ENCODE measurements at regions of chr13 and their contacts with region 1.

Region 1: GRCh38 chr13:112606109-112607001 is 18.4 kb upstream of the TUBGCP3 start:
- DNase-seq: peak; percentile 79 to 85
- ATAC-seq: peak; percentile 96 to 97
- H3K4me3 ChIP-seq: peak overlapping the region; percentile 50 to 72 (median 61)
- H3K27ac ChIP-seq: peak overlapping the region; percentile 32 to 66 (median 58)
- H3K4me1 ChIP-seq: peaks cover 5 to 8% of the 10 kb centered on the region in 2 donors
- H3K27me3 ChIP-seq: peaks cover 0 to 8% (median 0%) of the 10 kb centered on the region in 3 donors
- CTCF ChIP-seq: peak; percentile 84 to 97 (median 91)
- POLR2A ChIP-seq: peak; percentile 12 to 30

Region 2: GRCh38 chr13:111474136-111475002 is 1132.0 kb before region 1 on chr13:
- in situ Hi-C with region 1: loop called in 3 of 4 experiments (anchors 10 to 25 kb)
- intact Hi-C with region 1: loop called (anchors 1 kb)
- DNase-seq: no peak
- ATAC-seq: peak in 1 of 2 donors; percentile 45
- H3K4me3 ChIP-seq: no peak overlapping the region
- H3K27ac ChIP-seq: no peak overlapping the region
- H3K4me1 ChIP-seq: no peaks in the 10 kb centered on the region
- H3K27me3 ChIP-seq: peaks cover 0 to 8% (median 0%) of the 10 kb centered on the region in 3 donors
- CTCF ChIP-seq: peak in 4 of 5 experiments; percentile 33 to 52 (median 36)
- POLR2A ChIP-seq: no peak

Region 3: GRCh38 chr13:112079696-112080095 is 526.7 kb before region 1 on chr13:
- in situ Hi-C with region 1: loop called in 1 of 4 experiments (anchors 25 kb)
- intact Hi-C with region 1: no loop called
- DNase-seq: no peak
- ATAC-seq: no peak
- H3K4me3 ChIP-seq: no peak overlapping the region
- H3K27ac ChIP-seq: no peak overlapping the region
- H3K4me1 ChIP-seq: no peaks in the 10 kb centered on the region
- H3K27me3 ChIP-seq: peaks cover 37 to 46% (median 39%) of the 10 kb centered on the region in 3 donors
- CTCF ChIP-seq: no peak
- POLR2A ChIP-seq: no peak

Region 4: DNA sequence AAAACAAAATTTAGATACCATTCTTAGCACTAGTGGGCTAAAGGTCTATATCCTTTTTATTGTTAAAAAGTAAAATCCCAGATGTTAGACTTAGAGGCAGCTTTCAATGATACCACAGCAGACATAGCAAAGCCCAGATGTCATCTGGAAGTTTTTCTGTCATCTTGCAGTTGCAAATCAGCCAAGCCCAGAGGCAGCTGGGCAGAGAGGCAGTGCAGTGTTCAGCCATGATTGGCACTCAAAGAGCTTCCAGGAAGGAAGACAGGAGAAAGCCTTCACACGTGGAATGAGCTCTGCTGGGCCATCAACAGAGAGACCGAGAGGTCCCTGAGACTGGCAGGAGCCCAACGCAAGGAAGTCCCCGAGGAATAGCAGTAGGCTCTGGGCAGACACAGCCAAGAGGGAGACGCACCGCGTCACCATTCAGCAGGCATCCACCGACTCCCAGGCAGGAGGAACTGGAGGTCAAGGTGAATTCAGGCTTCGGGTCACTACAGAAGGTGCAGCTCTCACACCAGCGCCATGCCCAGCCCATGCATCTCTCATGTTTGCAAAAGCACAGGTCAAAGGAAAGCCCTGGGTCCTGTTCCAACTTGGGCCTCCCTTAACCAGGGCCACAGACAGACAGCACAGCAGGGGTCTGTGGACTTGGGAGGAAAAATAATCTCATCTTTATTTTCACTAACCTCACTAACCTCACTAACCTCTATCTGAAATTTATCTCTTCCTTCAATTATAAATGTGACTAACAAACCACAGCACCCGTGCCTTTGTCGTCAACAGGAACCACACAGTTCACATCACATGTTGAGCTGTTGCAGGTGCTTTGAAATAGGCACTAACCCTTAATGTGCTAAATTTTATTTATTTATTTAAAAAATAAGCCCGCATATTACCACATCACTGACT is 73.3 kb before region 1 on chr13:
- in situ Hi-C with region 1: no loop called
- intact Hi-C with region 1: loop called (anchors 10 kb)
- DNase-seq: no peak
- ATAC-seq: no peak
- H3K4me3 ChIP-seq: no peak overlapping the region
- H3K27ac ChIP-seq: no peak overlapping the region
- H3K4me1 ChIP-seq: no peaks in the 10 kb centered on the region
- H3K27me3 ChIP-seq: no peaks in the 10 kb centered on the region
- CTCF ChIP-seq: no peak
- POLR2A ChIP-seq: no peak

Region 5: GRCh38 chr13:112587764-112588489 is 18.4 kb before region 1 on chr13 and contains the start of gene TUBGCP3:
- in situ Hi-C with region 1: no loop called
- intact Hi-C with region 1: loop called (anchors 1 kb)
- DNase-seq: peak; percentile 61 to 80
- ATAC-seq: peak; percentile 90 to 92
- H3K4me3 ChIP-seq: peak within 1 kb of the TSS; percentile 86 to 97 (median 95)
- H3K27ac ChIP-seq: peak within 1 kb of the TSS; percentile 93 to 98 (median 96)
- H3K4me1 ChIP-seq: peaks cover 8 to 16% of the 10 kb centered on the region in 2 donors
- H3K27me3 ChIP-seq: no peaks in the 10 kb centered on the region
- CTCF ChIP-seq: peak; percentile 4 to 34 (median 23)
- POLR2A ChIP-seq: peak; percentile 11 to 27
- total RNA-seq, gene TUBGCP3: 10.0 to 14.3 (median 11.0) TPM

Region 6: DNA sequence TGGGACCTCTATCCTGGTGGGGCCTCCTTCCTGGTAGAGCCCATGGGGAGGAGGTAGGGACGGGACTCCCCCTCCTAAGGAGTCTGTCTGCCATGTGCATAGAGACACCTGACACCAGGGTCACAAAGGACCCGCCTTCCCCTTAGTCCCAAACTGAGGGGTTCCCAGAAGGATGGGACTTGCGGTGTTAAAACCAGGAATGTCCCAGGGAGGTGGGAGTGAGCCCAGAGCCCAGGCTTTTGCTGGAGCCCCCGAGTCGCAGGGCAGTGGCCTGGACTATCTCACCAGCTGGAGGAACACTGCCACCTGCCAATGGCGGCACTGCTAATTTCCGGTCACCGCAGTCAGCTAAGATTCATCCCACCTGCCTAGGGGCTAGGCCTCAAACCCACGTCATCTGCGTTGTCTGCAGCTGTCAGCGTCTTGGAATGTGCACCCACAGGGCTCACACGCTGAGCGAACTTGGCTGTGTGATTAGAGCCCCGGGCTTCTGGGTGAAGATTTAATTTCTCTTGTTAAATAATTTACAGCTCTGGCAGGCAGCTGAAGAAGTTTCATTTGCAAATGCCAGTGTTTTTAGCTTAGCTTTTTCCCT is 51.6 kb after region 1 on chr13:
- in situ Hi-C with region 1: no loop called
- intact Hi-C with region 1: no loop called
- DNase-seq: no peak
- ATAC-seq: no peak
- H3K4me3 ChIP-seq: no peak overlapping the region
- H3K27ac ChIP-seq: no peak overlapping the region
- H3K4me1 ChIP-seq: no peaks in the 10 kb centered on the region
- H3K27me3 ChIP-seq: no peaks in the 10 kb centered on the region
- CTCF ChIP-seq: no peak
- POLR2A ChIP-seq: no peak

Region 7: GRCh38 chr13:112783135-112783977 is 177.0 kb after region 1 on chr13:
- in situ Hi-C with region 1: no loop called
- intact Hi-C with region 1: no loop called
- DNase-seq: no peak
- ATAC-seq: peak; percentile 30 to 58
- H3K4me3 ChIP-seq: no peak overlapping the region
- H3K27ac ChIP-seq: peak overlapping the region; percentile 42 to 58 (median 53)
- H3K4me1 ChIP-seq: peaks cover 8 to 12% of the 10 kb centered on the region in 2 donors
- H3K27me3 ChIP-seq: no peaks in the 10 kb centered on the region
- CTCF ChIP-seq: no peak
- POLR2A ChIP-seq: no peak

Measured in gastrocnemius medialis (tissue), 4 donors.